ENCODE measurements at regions of chr6 and their contacts with region 1.

Region 1: GRCh38 chr6:160992061-160992979 is 751 bp downstream of the MAP3K4 start:
- DNase-seq: no peak
- H3K4me3 Mint-ChIP-seq: peak overlapping the region; percentile 95
- H3K27ac Mint-ChIP-seq: peak overlapping the region; percentile 91
- H3K4me1 Mint-ChIP-seq: peaks cover 21% of the 10 kb centered on the region
- H3K27me3 Mint-ChIP-seq: peaks cover 17% of the 10 kb centered on the region

Region 2: DNA sequence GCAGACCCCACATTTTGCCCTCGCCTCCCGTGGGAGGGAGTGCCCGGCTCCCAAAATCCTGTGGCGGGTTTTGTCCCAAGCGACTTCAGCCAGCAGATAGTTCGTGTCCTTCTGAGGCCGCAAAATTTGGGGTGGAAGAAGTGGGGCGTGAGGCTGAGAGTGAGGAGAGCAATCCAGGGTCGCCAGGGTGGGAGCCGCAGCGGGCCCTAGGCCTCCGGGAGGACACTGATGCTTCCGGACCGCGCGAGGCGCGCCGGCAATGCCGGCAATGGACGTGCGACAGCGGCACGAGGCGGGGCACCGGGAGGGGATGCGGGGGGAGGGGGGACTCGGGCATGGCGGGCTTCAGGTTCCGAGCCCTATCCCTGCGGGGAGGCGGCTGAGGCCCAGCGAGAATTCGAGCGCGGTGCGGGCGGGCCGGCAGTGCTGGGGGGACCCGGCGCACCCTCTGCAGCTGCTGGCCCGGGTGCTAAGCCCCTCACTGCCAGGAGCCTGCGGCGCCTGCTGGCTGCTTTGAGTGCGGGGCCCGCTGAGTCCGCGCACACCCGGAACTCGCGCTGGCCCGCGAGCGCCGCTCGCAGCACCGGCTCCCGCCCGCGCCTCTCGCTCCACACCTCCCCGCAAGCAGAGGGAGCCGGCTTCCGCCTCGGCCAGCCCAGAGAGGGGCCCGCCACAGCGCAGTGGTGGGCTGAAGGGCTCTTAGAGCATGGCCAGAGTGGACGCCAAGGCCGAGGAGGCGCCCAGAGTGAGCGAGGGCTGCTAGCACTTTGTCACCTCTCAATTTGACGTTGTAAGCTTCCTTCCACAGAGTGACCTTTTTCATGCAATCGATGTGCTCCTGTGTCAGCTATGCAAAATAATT is 472.0 kb before region 1 on chr6:
- intact Hi-C with region 1: loop called (anchors 10 kb)
- DNase-seq: peak; percentile 63
- H3K4me3 Mint-ChIP-seq: peak overlapping the region; percentile 91
- H3K27ac Mint-ChIP-seq: peak overlapping the region; percentile 83
- H3K4me1 Mint-ChIP-seq: peaks cover 18% of the 10 kb centered on the region
- H3K27me3 Mint-ChIP-seq: peaks cover 40% of the 10 kb centered on the region

Region 3: GRCh38 chr6:160853946-160854345 is 138.4 kb before region 1 on chr6:
- intact Hi-C with region 1: no loop called
- DNase-seq: no peak
- H3K4me3 Mint-ChIP-seq: no peak overlapping the region
- H3K27ac Mint-ChIP-seq: no peak overlapping the region
- H3K4me1 Mint-ChIP-seq: no peaks in the 10 kb centered on the region
- H3K27me3 Mint-ChIP-seq: no peaks in the 10 kb centered on the region

Region 4: GRCh38 chr6:160955508-160955907 is 36.8 kb before region 1 on chr6:
- intact Hi-C with region 1: loop called (anchors 1 kb)
- DNase-seq: no peak
- H3K4me3 Mint-ChIP-seq: no peak overlapping the region
- H3K27ac Mint-ChIP-seq: no peak overlapping the region
- H3K4me1 Mint-ChIP-seq: no peaks in the 10 kb centered on the region
- H3K27me3 Mint-ChIP-seq: peaks cover 6% of the 10 kb centered on the region

Region 5: DNA sequence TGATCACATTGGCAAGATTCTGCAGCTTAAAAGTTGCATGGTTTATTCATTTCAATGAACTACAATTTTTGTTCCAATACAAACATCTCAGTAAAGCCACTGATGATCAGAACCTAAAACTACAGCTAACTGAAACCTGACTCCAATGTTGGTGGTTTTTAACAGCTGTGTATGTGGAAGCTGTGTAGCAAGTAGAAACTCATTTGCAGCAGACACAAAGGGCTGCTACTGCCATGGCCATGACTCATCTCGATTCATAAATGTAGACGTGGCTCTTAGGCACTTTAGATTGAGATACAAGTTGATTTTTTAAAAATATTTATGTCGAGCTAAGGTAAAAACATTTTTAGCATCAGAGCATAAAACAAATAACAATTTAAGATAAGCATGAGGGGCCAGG is 20.2 kb before region 1 on chr6:
- intact Hi-C with region 1: no loop called
- DNase-seq: no peak
- H3K4me3 Mint-ChIP-seq: no peak overlapping the region
- H3K27ac Mint-ChIP-seq: no peak overlapping the region
- H3K4me1 Mint-ChIP-seq: no peaks in the 10 kb centered on the region
- H3K27me3 Mint-ChIP-seq: peaks cover 6% of the 10 kb centered on the region

Region 6: GRCh38 chr6:161111261-161111660 is 118.9 kb after region 1 on chr6:
- intact Hi-C with region 1: loop called (anchors 2 kb)
- DNase-seq: peak; percentile 21
- H3K4me3 Mint-ChIP-seq: peak overlapping the region; percentile 4
- H3K27ac Mint-ChIP-seq: peak overlapping the region; percentile 69
- H3K4me1 Mint-ChIP-seq: peaks cover 23% of the 10 kb centered on the region
- H3K27me3 Mint-ChIP-seq: no peaks in the 10 kb centered on the region

Region 7: GRCh38 chr6:161228921-161229591 is 236.7 kb after region 1 on chr6:
- intact Hi-C with region 1: loop called (anchors 5 kb)
- DNase-seq: no peak
- H3K4me3 Mint-ChIP-seq: peak overlapping the region; percentile 75
- H3K27ac Mint-ChIP-seq: peak overlapping the region; percentile 93
- H3K4me1 Mint-ChIP-seq: peaks cover 61% of the 10 kb centered on the region
- H3K27me3 Mint-ChIP-seq: no peaks in the 10 kb centered on the region

Region 8: DNA sequence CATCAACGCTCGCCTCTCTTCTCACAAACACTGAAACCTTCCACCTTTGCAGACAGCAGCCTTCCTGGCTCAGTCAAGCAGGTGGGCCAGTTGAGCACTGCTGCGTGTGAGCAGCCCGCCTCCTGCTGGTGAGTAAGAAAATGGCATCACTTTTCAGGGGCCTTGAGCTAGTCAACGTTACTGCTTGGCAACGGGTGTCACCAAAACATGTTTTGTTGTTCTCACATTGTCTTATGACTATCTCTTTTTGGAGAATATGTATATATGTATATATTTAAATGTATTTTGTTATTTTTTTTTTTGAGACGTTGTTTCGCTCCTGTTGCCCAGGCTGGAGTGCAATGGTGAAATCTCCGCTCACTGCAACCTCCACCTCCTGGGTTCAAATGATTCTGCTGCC is 378.6 kb after region 1 on chr6:
- intact Hi-C with region 1: loop called (anchors 1 kb)
- DNase-seq: peak; percentile 54
- H3K4me3 Mint-ChIP-seq: no peak overlapping the region
- H3K27ac Mint-ChIP-seq: no peak overlapping the region
- H3K4me1 Mint-ChIP-seq: no peaks in the 10 kb centered on the region
- H3K27me3 Mint-ChIP-seq: no peaks in the 10 kb centered on the region

Region 9: GRCh38 chr6:162727309-162728182 is 1735.2 kb after region 1 on chr6 and contains the starts of genes PACRG and PRKN:
- intact Hi-C with region 1: loop called (anchors 1 kb)
- DNase-seq: peak; percentile 95
- H3K4me3 Mint-ChIP-seq: peak within 1 kb of the TSS; percentile 89
- H3K27ac Mint-ChIP-seq: peak within 1 kb of the TSS; percentile 86
- H3K4me1 Mint-ChIP-seq: peaks cover 11% of the 10 kb centered on the region
- H3K27me3 Mint-ChIP-seq: peaks cover 7% of the 10 kb centered on the region
- total RNA-seq, gene PACRG: 0.36 TPM in 1 of 2 replicates, not detected in the other
- total RNA-seq, gene PRKN: not detected in 2 replicates